Heart right ventricle (tissue), 16 donors: ENCODE measurements at regions of chr19 and their contacts with region 1.

Region 1: DNA sequence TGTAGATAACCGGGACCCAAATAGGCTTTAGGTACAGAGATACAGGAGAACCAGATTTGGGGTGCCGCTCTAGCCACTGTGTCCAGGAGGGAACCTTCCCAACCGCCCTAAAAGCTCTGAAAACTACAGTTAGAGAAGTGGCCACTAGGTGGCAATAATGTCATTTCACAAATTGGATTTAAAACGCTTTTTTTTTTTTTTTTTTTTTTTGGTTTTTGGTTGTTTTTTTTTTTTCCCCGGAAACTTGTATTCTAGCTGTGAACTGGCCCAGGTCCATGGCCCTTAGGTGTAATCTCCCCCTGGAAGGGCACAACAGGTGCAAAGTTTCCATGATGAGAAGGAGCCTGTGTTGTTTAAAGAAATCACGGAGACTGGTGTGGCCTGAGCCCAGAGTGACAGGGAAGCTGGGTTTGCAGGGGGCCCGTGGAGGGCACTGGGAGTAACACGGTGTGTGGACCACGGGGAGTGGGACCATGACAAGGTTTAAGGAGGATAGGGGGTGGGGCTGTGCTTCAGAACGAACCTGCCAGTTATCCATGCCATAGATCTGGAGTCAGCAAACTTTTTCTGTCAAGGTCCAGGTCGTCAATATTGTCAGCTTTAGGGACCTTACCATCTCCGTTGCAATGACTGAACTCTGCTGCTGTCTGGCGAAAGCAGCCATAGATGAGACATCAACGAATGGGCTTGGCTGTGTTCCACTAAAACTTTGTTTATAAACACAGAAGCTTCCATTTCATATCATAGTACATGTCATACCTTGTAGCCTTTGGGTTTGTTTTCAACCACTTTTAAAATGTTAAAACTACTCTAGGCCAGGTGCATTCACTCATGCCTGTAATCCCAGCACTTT is 10.1 kb downstream of the OR1I1 start:
- DNase-seq: peak; percentile 15 to 70
- ATAC-seq: peak in 7 of 8 donors; percentile 41 to 64 (median 57)
- H3K4me3 ChIP-seq: no peak overlapping the region
- H3K27ac ChIP-seq: no peak overlapping the region
- H3K4me1 ChIP-seq: peaks cover 0 to 6% (median 0%) of the 10 kb centered on the region in 9 donors
- H3K27me3 ChIP-seq: peaks cover 0 to 20% (median 6%) of the 10 kb centered on the region in 7 donors
- CTCF ChIP-seq: peak; percentile 52 to 76 (median 72)

Region 2: GRCh38 chr19:15466851-15467733 is 375.0 kb after region 1 on chr19:
- intact Hi-C with region 1: loop called in 1 of 10 experiments (anchors 10 kb)
- DNase-seq: no peak
- ATAC-seq: peak in 3 of 8 donors; percentile 7 to 32 (median 31)
- H3K4me3 ChIP-seq: no peak overlapping the region
- H3K27ac ChIP-seq: peak overlapping the region in 1 of 10 donors; percentile 76
- H3K4me1 ChIP-seq: peaks cover 0 to 54% (median 7%) of the 10 kb centered on the region in 9 donors
- H3K27me3 ChIP-seq: peaks cover 5 to 87% (median 56%) of the 10 kb centered on the region in 7 donors
- CTCF ChIP-seq: no peak